ENCODE measurements at regions of chr4 and their contacts with region 1.

Region 1: DNA sequence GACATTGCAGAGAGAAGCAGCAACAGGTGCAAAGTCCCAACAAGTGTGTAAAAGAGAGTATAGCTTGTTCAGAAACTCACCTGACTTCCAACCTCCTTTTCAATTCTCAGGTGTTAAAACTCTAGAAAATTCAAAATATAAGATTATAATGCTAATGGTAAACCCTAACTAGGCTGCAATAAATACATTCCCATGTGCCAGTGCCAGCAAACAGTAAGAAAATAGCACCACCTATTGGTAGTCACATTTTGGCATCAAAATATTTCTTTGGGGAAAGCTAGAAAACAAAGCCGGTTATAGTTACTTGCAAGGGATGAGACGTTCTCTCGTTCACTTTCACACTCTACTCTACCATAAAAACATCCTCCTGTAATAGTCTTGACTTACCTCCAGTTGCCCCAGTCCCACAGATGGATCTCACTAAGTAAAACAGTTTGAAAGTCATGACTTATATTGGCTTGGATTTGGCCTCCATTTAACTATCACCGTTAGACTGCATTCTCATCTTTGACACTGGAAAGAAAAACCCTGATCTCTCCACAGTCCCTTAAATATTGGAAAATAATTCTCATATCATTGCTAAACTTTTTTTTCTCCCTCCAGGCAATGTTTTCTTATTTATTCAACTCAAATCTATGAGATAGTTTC is 9.6 kb downstream of the BMP3 start:
- DNase-seq: peak; percentile 82
- H3K4me3 ChIP-seq: peak overlapping the region; percentile 52
- H3K27ac ChIP-seq: peak overlapping the region; percentile 92
- H3K4me1 ChIP-seq: peaks cover 72% of the 10 kb centered on the region
- CTCF ChIP-seq: peak; percentile 96

Region 2: DNA sequence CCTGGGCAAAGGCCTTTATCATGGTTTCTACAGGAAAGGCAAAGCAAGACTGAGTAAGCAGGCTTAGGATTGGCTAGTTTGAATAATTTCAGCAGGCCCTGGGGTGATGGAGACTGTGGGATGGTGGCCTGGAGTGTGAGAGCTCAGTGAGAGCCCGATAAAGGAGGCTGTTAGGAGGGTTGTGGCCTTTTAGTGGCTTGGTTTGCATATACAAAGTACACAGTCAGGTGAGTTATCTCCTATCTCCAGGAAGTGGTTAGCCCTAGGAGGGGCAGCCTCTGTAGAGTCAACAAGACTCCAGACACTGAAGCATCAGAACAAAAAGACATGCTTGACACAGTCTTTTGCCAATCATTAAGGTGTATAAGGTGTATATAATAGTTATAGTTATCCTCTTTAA is 547.4 kb before region 1 on chr4:
- CTCF ChIA-PET with region 1: no interaction called
- POLR2A ChIA-PET with region 1: interaction called, 5 read pairs
- intact Hi-C with region 1: loop called (anchors 1 kb)
- DNase-seq: peak; percentile 27
- H3K4me3 ChIP-seq: no peak overlapping the region
- H3K27ac ChIP-seq: no peak overlapping the region
- H3K4me1 ChIP-seq: peaks cover 21% of the 10 kb centered on the region
- CTCF ChIP-seq: no peak

Region 3: DNA sequence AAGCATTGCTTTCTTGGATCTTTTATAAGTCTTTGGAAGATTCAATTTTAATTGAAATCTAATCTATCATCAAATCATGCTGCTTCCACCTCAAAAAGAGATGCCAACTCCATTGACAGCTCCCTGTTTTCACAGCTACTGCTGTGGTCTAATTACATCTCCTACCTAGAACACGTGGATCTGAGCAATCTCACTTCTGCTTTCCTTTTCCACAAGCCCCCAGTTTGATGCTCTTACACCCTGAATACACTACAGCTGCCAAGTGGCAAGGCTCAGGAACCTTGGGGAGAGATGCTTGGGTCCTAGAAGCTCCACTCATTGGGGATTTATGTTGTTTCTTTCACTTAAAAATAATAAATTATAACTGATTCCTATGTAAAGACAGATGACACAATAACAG is 532.6 kb before region 1 on chr4:
- CTCF ChIA-PET with region 1: no interaction called
- POLR2A ChIA-PET with region 1: no interaction called
- intact Hi-C with region 1: loop called (anchors 5 kb)
- DNase-seq: peak; percentile 85
- H3K4me3 ChIP-seq: no peak overlapping the region
- H3K27ac ChIP-seq: peak overlapping the region; percentile 55
- H3K4me1 ChIP-seq: peaks cover 37% of the 10 kb centered on the region
- CTCF ChIP-seq: no peak

Region 4: GRCh38 chr4:80876810-80877209 is 163.3 kb before region 1 on chr4:
- CTCF ChIA-PET with region 1: interaction called, 3 read pairs
- POLR2A ChIA-PET with region 1: interaction called, 29 read pairs
- intact Hi-C with region 1: no loop called
- DNase-seq: peak; percentile 67
- H3K4me3 ChIP-seq: peak overlapping the region; percentile 4
- H3K27ac ChIP-seq: peak overlapping the region; percentile 98
- H3K4me1 ChIP-seq: peaks cover 58% of the 10 kb centered on the region
- CTCF ChIP-seq: no peak

Region 5: GRCh38 chr4:81021142-81021944 is 18.8 kb before region 1 on chr4:
- CTCF ChIA-PET with region 1: no interaction called
- POLR2A ChIA-PET with region 1: interaction called, 26 read pairs
- intact Hi-C with region 1: no loop called
- DNase-seq: no peak
- H3K4me3 ChIP-seq: peak overlapping the region; percentile 10
- H3K27ac ChIP-seq: peak overlapping the region; percentile 22
- H3K4me1 ChIP-seq: peaks cover 57% of the 10 kb centered on the region
- CTCF ChIP-seq: no peak